CD8-positive, alpha-beta T cell (primary cell): ENCODE measurements at regions of chr18 and their contacts with region 1.

Region 1: DNA sequence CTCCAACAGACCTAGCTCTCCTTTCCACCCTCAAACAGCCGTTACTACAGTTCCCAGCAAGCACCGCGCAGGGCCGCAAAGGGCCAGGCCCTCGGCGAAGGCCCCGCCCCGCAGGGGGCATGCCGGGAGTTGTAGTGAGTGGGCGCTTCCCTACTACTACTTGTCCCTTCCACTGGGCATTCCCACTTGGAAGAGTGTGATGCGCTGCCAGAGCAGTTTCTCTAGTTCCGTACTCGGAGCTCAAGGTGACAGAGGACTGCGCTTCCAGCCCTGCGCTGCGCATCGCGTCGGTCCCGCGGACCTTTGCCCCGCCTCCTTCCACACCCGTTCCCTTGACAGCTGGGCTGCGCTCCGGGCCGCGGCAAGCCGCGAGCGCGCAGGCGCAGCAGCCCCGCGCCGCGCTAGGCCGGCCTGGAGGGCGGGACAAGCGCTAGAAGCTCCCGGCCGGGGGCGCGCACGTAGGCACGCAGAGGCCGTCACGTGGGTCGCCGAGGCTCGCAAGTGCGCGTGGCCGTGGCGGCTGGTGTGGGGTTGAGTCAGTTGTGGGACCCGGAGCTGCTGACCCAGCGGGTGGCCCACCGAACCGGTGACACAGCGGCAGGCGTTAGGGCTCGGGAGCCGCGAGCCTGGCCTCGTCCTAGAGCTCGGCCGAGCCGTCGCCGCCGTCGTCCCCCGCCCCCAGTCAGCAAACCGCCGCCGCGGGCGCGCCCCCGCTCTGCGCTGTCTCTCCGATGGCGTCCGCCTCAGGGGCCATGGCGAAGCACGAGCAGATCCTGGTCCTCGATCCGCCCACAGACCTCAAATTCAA is at the start of gene VAPA:
- DNase-seq: peak; percentile 86 to 99 (median 93)
- ATAC-seq: peak; percentile 82
- H3K4me3 ChIP-seq: peak within 1 kb of the TSS; percentile 82 to 99
- H3K4me3 Mint-ChIP-seq: peak within 1 kb of the TSS; percentile 92
- H3K27ac ChIP-seq: peak within 1 kb of the TSS; percentile 88 to 94
- H3K27ac Mint-ChIP-seq: peak within 1 kb of the TSS; percentile 96
- H3K4me1 ChIP-seq: peaks cover 41% of the 10 kb centered on the region
- H3K4me1 Mint-ChIP-seq: peaks cover 26% of the 10 kb centered on the region
- H3K27me3 ChIP-seq: no peaks in the 10 kb centered on the region
- H3K27me3 Mint-ChIP-seq: no peaks in the 10 kb centered on the region
- CTCF ChIP-seq: no peak
- total RNA-seq, gene VAPA: 169 to 177 TPM

Region 2: DNA sequence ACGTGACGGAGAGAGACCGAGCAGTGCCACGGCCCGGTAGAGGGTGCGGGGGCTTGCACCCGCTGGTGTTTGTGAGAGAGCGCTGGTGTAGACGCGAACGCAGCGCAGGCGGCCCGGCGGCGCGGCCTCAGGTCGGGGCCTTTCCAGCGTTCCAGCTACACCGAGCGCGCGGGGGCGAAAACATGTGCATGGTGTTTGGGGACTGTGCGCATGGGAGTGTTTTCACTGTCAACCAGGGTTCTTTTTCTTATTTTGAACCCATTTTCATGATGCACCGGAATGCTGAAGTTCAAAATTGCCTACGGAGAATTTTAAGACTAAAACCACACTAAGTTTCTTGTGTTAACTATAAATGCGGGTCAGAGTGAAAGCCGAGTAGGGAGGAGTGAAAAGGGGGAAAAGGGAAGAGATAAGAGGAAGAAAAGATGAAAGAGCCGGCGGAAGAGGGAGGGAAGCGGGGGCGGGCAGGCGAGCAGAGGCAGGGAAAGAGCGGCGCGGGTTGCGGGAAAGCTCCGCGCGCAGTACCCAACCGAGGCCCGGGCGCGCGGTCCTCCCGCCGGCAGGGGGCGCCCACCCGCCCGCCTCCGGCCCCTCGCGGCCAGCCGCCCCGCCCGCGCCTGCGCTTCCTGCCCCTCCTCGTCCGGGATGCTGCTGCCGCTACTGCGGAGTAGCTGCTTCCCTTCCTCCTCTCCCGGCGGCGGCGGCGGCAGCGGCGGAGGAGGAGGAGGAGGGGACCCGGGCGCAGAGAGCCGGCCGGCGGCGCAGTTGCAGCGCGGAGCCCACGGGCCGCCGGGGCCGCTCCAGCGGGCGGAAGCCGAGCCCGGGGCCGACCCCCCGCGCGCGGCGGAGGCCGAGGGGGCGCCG is 1304.7 kb before region 1 on chr18 and contains the start of gene RAB12:
- CTCF ChIA-PET with region 1: no interaction called
- POLR2A ChIA-PET with region 1: interaction called, 3 read pairs
- intact Hi-C with region 1: loop called (anchors 5 kb)
- DNase-seq: peak; percentile 72 to 93 (median 88)
- ATAC-seq: peak; percentile 92
- H3K4me3 ChIP-seq: peak within 1 kb of the TSS; percentile 64 to 70
- H3K4me3 Mint-ChIP-seq: peak within 1 kb of the TSS; percentile 90
- H3K27ac ChIP-seq: peak within 1 kb of the TSS; percentile 53 to 70
- H3K27ac Mint-ChIP-seq: peak within 1 kb of the TSS; percentile 90
- H3K4me1 ChIP-seq: peaks cover 42% of the 10 kb centered on the region
- H3K4me1 Mint-ChIP-seq: peaks cover 50% of the 10 kb centered on the region
- H3K27me3 ChIP-seq: no peaks in the 10 kb centered on the region
- H3K27me3 Mint-ChIP-seq: no peaks in the 10 kb centered on the region
- CTCF ChIP-seq: peak; percentile 70
- total RNA-seq, gene RAB12: 20.2 to 20.9 TPM

Region 3: GRCh38 chr18:9136315-9137155 is 777.2 kb before region 1 on chr18 and contains the start of gene ANKRD12:
- CTCF ChIA-PET with region 1: no interaction called
- POLR2A ChIA-PET with region 1: interaction called, 10 read pairs
- intact Hi-C with region 1: loop called (anchors 2 to 5 kb)
- DNase-seq: peak; percentile 96 to 99 (median 98)
- ATAC-seq: peak; percentile 65
- H3K4me3 ChIP-seq: peak within 1 kb of the TSS; percentile 87 to 93
- H3K4me3 Mint-ChIP-seq: peak within 1 kb of the TSS; percentile 99
- H3K27ac ChIP-seq: peak within 1 kb of the TSS; percentile 94 to 96
- H3K27ac Mint-ChIP-seq: peak within 1 kb of the TSS; percentile 99
- H3K4me1 ChIP-seq: peaks cover 56% of the 10 kb centered on the region
- H3K4me1 Mint-ChIP-seq: peaks cover 68% of the 10 kb centered on the region
- H3K27me3 ChIP-seq: no peaks in the 10 kb centered on the region
- H3K27me3 Mint-ChIP-seq: no peaks in the 10 kb centered on the region
- CTCF ChIP-seq: no peak
- total RNA-seq, gene ANKRD12: 167 to 177 TPM

Region 4: GRCh38 chr18:9614401-9615279 is 299.1 kb before region 1 on chr18 and contains the start of gene PPP4R1:
- CTCF ChIA-PET with region 1: no interaction called
- POLR2A ChIA-PET with region 1: no interaction called
- intact Hi-C with region 1: loop called (anchors 2 to 5 kb)
- DNase-seq: peak; percentile 36 to 81 (median 66)
- ATAC-seq: peak; percentile 67
- H3K4me3 ChIP-seq: peak within 1 kb of the TSS; percentile 64 to 76
- H3K4me3 Mint-ChIP-seq: peak within 1 kb of the TSS; percentile 94
- H3K27ac ChIP-seq: peak within 1 kb of the TSS; percentile 4 to 63
- H3K27ac Mint-ChIP-seq: peak within 1 kb of the TSS; percentile 90
- H3K4me1 ChIP-seq: peaks cover 20% of the 10 kb centered on the region
- H3K4me1 Mint-ChIP-seq: peaks cover 36% of the 10 kb centered on the region
- H3K27me3 ChIP-seq: no peaks in the 10 kb centered on the region
- H3K27me3 Mint-ChIP-seq: no peaks in the 10 kb centered on the region
- CTCF ChIP-seq: no peak
- total RNA-seq, gene PPP4R1: 35.1 to 40.1 TPM

Region 5: DNA sequence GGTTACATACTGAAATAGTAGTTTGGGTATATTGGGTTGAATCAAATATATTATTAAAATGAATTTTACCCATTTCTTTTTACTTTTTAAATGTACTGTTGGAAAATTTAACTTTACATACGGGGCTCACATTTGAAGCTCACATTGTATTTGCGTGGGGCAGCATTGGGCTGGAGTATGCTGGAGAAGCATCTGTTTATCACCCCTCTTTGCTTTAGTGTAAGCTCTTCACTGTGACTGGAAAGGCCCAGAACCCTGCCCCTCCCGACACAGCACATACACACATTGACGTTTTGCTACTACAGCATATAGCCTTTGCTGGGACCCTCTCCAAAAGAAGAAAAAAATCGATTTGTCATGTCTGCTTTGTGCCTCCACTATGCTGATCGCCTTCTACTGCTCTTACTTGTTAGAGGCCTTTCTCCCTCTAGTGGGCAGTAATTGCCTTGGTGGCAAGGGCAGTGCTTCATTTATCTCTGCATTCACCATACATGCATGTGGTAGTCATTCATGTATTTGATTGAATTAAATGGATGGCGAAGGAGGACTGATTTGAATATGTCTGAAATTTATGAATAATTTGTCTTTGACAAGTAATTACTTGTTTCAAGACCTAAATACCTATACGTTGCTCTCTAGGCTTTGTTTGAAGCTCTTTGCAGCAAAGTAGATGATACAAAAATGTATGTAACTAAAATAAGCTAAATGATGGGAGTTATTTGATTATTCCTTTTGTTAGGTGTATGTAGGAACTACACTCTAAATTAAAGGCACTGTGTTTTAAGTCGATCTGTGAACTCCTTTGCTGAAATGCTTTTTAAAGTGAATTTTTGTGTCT is 37.5 kb after region 1 on chr18:
- CTCF ChIA-PET with region 1: no interaction called
- POLR2A ChIA-PET with region 1: interaction called, 8 read pairs
- intact Hi-C with region 1: loop called in 1 of 2 experiments (anchors 5 kb)
- DNase-seq: peak in 2 of 9 experiments; percentile 33 to 54
- ATAC-seq: peak; percentile 49
- H3K4me3 ChIP-seq: no peak overlapping the region
- H3K4me3 Mint-ChIP-seq: no peak overlapping the region
- H3K27ac ChIP-seq: no peak overlapping the region
- H3K27ac Mint-ChIP-seq: no peak overlapping the region
- H3K4me1 ChIP-seq: no peaks in the 10 kb centered on the region
- H3K4me1 Mint-ChIP-seq: peaks cover 7% of the 10 kb centered on the region
- H3K27me3 ChIP-seq: no peaks in the 10 kb centered on the region
- H3K27me3 Mint-ChIP-seq: no peaks in the 10 kb centered on the region
- CTCF ChIP-seq: peak; percentile 35

Region 6: GRCh38 chr18:11851146-11851805 is 1937.5 kb after region 1 on chr18 and contains the start of gene CHMP1B:
- CTCF ChIA-PET with region 1: no interaction called
- POLR2A ChIA-PET with region 1: no interaction called
- intact Hi-C with region 1: loop called (anchors 5 kb)
- DNase-seq: peak; percentile 93 to 99 (median 98)
- ATAC-seq: peak; percentile 83
- H3K4me3 ChIP-seq: peak within 1 kb of the TSS; percentile 94 to 99
- H3K4me3 Mint-ChIP-seq: peak within 1 kb of the TSS; percentile 100
- H3K27ac ChIP-seq: peak within 1 kb of the TSS; percentile 96 to 99
- H3K27ac Mint-ChIP-seq: peak within 1 kb of the TSS; percentile 100
- H3K4me1 ChIP-seq: peaks cover 25% of the 10 kb centered on the region
- H3K4me1 Mint-ChIP-seq: peaks cover 50% of the 10 kb centered on the region
- H3K27me3 ChIP-seq: no peaks in the 10 kb centered on the region
- H3K27me3 Mint-ChIP-seq: no peaks in the 10 kb centered on the region
- CTCF ChIP-seq: no peak
- total RNA-seq, gene CHMP1B: 71.2 to 74.2 TPM